Aorta (tissue), 5 donors: ENCODE measurements at regions of chr1 and their contacts with region 1.

Region 1: GRCh38 chr1:205528887-205529825 is 24.7 kb downstream of the CDK18 start:
- DNase-seq: peak; percentile 85 to 96
- ATAC-seq: peak; percentile 88
- H3K4me3 ChIP-seq: no peak overlapping the region
- H3K27ac ChIP-seq: no peak overlapping the region
- H3K4me1 ChIP-seq: no peaks in the 10 kb centered on the region
- H3K27me3 ChIP-seq: no peaks in the 10 kb centered on the region

Region 2: GRCh38 chr1:205335643-205336091 is 193.5 kb before region 1 on chr1:
- intact Hi-C with region 1: loop called in 1 of 2 experiments (anchors 10 kb)
- DNase-seq: peak; percentile 88 to 91
- ATAC-seq: peak; percentile 74
- H3K4me3 ChIP-seq: no peak overlapping the region
- H3K27ac ChIP-seq: no peak overlapping the region
- H3K4me1 ChIP-seq: no peaks in the 10 kb centered on the region
- H3K27me3 ChIP-seq: no peaks in the 10 kb centered on the region

Region 3: DNA sequence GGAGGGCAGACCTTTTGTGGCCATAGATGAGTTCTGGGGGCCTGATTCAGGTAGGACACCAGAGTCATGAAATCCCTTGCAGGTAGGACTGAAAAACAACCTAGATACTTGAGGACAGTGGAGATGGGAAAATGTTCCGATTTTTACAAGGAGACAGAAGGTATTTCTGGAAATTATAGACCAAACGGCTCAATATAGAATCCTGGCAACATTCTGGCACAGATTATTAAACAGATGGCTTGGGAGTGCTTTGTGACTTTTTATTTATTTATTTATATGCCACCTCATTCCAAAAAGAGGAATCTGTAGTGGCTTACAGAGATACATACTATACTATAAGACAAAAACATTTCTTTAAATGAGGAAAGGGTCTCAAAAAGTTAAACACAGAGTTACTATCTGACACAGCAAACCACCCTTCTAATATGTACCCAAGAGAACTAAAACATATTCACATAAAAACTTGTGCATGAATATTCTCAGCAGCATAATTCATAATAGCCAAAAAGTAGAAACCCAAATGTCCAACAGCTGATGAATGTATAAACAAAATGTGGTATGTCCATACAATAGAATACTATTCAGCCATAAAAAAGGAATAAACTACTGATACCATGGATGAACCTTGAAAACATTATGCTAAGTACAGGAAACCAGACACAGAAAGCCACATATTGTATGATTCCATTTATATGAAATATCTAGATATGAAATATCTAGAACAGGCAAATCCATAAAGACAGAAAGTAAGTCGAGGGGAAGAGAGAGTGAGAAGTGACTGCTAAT is 25.1 kb after region 1 on chr1:
- intact Hi-C with region 1: no loop called
- DNase-seq: no peak
- ATAC-seq: no peak
- H3K4me3 ChIP-seq: no peak overlapping the region
- H3K27ac ChIP-seq: no peak overlapping the region
- H3K4me1 ChIP-seq: no peaks in the 10 kb centered on the region
- H3K27me3 ChIP-seq: peaks cover 1 to 2% of the 10 kb centered on the region in 2 donors

Region 4: GRCh38 chr1:205700865-205701401 is 171.8 kb after region 1 on chr1:
- intact Hi-C with region 1: no loop called
- DNase-seq: no peak
- ATAC-seq: peak; percentile 24
- H3K4me3 ChIP-seq: no peak overlapping the region
- H3K27ac ChIP-seq: no peak overlapping the region
- H3K4me1 ChIP-seq: no peaks in the 10 kb centered on the region
- H3K27me3 ChIP-seq: no peaks in the 10 kb centered on the region

Region 5: DNA sequence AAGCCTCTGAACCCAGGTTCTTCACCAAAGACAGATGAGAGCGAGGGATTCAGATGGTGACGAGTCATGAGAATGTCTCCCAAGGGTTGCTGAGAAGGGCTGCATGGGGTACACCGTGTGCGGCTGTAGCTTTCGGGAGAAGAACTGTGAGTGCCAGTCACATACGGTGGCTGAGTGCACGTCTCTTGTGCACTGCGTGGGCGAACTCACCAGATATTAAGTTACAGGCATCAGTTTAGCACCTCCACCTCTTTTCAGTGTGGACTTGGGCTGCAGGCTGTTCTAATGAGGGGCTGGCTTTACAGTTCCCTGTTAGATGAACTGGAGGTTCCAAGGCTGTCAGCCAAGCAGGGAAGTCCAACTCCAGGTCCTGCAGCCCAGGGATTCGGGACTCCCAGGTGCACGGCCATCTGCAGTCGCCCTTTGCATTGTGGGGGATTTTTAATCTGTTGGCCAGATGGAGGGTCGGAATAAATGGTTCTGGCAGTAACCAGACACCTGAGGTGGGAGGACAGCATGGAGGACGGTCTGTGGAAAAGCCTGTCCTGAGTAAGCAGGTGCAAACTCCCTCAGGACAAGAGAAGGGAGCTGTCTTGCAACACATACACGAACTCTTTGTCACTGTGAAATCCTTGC is 614.5 kb after region 1 on chr1:
- intact Hi-C with region 1: no loop called
- DNase-seq: no peak
- ATAC-seq: no peak
- H3K4me3 ChIP-seq: no peak overlapping the region
- H3K27ac ChIP-seq: no peak overlapping the region
- H3K4me1 ChIP-seq: no peaks in the 10 kb centered on the region
- H3K27me3 ChIP-seq: no peaks in the 10 kb centered on the region